ENCODE measurements at regions of chr2 and their contacts with region 1.

Region 1: DNA sequence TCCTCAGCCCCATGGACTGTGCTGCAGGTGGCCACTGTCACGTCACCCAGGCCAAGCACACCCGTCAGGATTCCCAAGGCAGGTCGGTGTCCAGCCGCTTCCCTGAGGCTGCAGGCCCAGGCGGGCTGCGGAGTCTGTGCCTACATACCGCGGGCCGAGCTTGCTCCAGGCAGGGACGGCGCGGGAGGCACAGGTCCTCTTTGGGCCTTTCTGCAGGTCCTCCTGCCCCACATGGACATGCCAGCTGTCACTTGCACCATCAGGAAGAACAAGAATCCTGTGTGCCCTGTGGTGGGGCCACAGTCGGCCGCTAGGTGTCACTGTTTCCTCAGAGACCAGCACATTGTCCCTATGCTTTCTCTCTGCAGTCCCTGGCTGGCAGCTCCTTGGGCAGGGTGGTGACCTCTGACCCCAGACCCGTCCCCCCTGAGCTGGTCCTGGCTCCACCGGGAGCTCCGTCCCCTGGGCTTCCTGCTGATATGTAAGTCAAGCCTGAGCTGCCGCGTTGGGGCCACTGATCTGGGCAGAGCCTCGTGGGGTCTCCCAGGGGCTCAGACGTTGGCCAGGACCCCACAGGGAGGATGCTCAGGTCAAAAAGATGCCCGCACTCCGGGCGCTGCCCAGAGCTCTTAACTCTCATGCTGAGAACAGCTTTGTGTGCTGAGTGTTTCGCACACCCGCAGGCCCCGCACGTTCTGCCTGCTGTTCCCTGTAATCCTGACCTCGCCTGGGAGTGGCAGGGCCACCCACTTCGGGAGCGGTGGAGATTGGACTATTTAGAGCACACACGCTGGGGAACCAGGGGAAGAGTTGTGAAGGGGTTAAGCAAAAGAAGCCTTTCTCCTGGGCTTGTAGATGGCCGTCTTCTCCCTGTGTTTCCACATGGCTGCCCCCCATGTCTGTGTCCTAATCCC is 17.3 kb upstream of the AGXT start:
- DNase-seq: peak; percentile 52
- H3K4me3 ChIP-seq: no peak overlapping the region
- H3K27ac ChIP-seq: no peak overlapping the region
- H3K4me1 ChIP-seq: no peaks in the 10 kb centered on the region
- H3K27me3 ChIP-seq: peaks cover 2% of the 10 kb centered on the region
- CTCF ChIP-seq: peak; percentile 90 to 98

Region 2: DNA sequence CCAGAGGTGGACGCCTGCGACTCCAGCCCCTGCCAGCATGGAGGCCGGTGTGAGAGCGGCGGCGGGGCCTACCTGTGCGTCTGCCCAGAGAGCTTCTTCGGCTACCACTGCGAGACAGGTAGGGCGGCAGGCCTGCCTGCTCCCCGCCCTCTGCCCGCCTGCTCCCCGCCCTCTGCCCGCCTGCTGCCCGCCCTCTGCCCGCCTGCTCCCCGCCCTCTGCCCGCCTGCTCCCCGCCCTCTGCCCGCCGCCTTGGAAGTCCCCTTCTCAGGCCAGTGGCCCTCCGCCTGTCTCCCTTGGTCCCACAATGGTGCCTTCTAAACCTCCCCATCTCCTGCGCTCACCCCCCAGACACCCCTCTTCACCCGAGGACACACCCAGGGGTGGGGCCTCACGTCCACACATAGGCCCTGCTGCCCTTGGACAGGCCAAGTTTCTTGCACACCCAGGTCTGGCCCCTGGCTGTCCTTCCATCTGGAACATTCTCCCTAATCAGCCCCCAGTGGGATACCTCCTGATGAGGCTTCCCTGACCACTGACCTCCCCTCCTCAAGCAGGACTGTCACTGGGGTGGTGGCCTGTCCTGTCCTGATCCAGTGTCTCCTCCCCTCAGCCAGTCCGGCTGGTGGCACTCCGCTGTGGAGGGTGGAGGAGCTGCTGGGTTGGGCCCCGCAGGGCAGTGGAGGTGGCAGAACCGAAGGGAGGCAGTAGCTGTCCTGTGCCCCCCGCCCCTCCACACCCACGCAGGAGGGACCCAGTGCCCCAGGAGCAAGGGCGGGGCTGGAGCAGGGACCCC is 212.9 kb after region 1 on chr2:
- CTCF ChIA-PET with region 1: no interaction called
- dilution Hi-C with region 1: no loop called
- in situ Hi-C with region 1: loop called in 1 of 2 experiments (anchors 25 kb)
- intact Hi-C with region 1: no loop called
- DNase-seq: peak; percentile 56
- H3K4me3 ChIP-seq: peak overlapping the region in 2 of 3 experiments; percentile 16 to 53
- H3K27ac ChIP-seq: no peak overlapping the region
- H3K4me1 ChIP-seq: peaks cover 24% of the 10 kb centered on the region
- H3K27me3 ChIP-seq: peaks cover 4% of the 10 kb centered on the region
- CTCF ChIP-seq: no peak

Region 3: DNA sequence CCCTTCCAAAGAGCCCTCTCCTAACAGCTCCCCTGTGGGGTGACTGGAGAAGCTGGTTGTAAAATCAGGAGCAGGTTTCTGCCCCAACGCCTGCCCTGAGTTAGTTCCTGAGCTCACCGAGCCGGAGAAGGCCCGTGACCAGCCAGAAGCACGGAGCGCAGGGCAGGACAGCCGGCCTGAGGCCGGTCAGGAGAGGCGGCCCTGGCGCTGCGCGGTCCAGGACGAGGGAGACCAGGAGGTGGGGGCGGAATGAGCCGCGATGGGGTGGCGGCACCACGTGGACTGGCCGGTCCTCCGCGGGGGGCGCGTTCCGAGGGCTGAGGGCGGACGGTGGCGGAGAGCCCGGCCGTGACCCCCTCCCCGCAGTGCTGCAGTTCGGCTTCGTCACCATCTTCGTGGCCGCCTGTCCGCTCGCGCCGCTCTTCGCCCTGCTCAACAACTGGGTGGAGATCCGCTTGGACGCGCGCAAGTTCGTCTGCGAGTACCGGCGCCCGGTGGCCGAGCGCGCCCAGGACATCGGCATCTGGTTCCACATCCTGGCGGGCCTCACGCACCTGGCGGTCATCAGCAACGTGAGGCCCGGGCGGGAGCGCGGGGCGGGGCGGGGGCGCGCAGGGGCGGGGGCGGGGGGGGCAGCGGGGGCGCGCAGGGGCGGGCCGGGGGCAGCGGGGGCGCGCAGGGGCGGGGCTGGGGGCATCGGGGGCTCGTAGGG is 366.1 kb after region 1 on chr2:
- CTCF ChIA-PET with region 1: no interaction called
- dilution Hi-C with region 1: no loop called
- in situ Hi-C with region 1: loop called in 1 of 2 experiments (anchors 25 kb)
- intact Hi-C with region 1: loop called (anchors 1 kb)
- DNase-seq: peak; percentile 54
- H3K4me3 ChIP-seq: peak overlapping the region in 2 of 3 experiments; percentile 55 to 58
- H3K27ac ChIP-seq: no peak overlapping the region
- H3K4me1 ChIP-seq: peaks cover 11% of the 10 kb centered on the region
- H3K27me3 ChIP-seq: no peaks in the 10 kb centered on the region
- CTCF ChIP-seq: no peak

Region 4: GRCh38 chr2:241482176-241482955 is 631.0 kb after region 1 on chr2:
- CTCF ChIA-PET with region 1: no interaction called
- dilution Hi-C with region 1: loop called (anchors 5 kb)
- in situ Hi-C with region 1: no loop called
- intact Hi-C with region 1: no loop called
- DNase-seq: no peak
- H3K4me3 ChIP-seq: no peak overlapping the region
- H3K27ac ChIP-seq: no peak overlapping the region
- H3K4me1 ChIP-seq: no peaks in the 10 kb centered on the region
- H3K27me3 ChIP-seq: no peaks in the 10 kb centered on the region
- CTCF ChIP-seq: no peak

Region 5: GRCh38 chr2:241734467-241735208 is 883.3 kb after region 1 on chr2 and contains the start of gene D2HGDH:
- CTCF ChIA-PET with region 1: no interaction called
- dilution Hi-C with region 1: no loop called
- in situ Hi-C with region 1: no loop called
- intact Hi-C with region 1: loop called (anchors 5 kb)
- DNase-seq: peak; percentile 70
- H3K4me3 ChIP-seq: peak within 1 kb of the TSS; percentile 49 to 85 (median 72)
- H3K27ac ChIP-seq: no peak within 1 kb of the TSS
- H3K4me1 ChIP-seq: peaks cover 30% of the 10 kb centered on the region
- H3K27me3 ChIP-seq: no peaks in the 10 kb centered on the region
- CTCF ChIP-seq: no peak
- total RNA-seq, gene D2HGDH: 13.8 to 27.2 TPM